ENCODE measurements at regions of chr17 and their contacts with region 1.

Region 1: DNA sequence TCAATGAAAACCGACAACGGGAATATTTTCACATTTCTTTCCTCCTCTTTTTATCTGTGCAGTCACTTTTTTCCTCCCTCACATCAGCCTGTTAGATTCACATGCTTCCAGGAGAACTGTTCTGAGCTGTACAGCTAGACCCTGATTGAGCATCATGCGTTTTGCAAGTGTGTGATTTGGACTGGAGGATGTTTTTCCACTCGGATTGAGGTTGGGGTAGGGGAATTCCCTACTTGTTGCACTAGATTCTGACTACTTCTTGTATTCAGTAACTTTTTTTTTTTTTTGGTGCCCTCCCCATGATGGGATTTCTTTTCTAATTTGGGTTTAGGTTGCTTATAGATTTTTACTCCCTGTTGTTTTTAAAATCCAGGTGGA is 4.8 kb downstream of the MSI2 start:
- DNase-seq: no peak
- ATAC-seq: no peak

Region 2: DNA sequence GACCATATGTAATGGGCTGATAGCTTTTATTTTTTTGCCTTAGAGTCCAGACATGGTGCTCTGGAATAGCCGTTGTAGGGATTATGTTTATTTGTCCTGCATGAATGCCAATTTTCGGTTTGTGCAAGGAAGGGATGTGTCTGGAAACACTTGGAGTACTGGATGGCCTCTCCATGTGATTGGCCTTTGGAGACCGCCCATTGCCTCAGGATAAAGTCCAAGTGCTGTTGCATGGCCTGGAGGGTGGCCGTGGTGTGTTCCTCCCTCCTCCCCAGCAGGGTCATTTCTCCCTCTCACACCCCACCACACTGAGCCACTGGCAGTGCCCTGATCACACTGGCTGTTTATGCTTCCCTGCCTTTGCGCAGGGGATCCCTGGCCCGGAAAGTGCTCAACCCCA is 89.2 kb after region 1 on chr17:
- intact Hi-C with region 1: no loop called
- DNase-seq: peak; percentile 66
- ATAC-seq: peak; percentile 95

Region 3: GRCh38 chr17:58254803-58255388 is 993.8 kb after region 1 on chr17:
- intact Hi-C with region 1: loop called (anchors 5 kb)
- DNase-seq: no peak
- ATAC-seq: no peak

Measured in sciatic nerve (tissue), 2 donors.